Calu3 (cell line): ENCODE measurements at regions of chr12 and their contacts with region 1.

Region 1: DNA sequence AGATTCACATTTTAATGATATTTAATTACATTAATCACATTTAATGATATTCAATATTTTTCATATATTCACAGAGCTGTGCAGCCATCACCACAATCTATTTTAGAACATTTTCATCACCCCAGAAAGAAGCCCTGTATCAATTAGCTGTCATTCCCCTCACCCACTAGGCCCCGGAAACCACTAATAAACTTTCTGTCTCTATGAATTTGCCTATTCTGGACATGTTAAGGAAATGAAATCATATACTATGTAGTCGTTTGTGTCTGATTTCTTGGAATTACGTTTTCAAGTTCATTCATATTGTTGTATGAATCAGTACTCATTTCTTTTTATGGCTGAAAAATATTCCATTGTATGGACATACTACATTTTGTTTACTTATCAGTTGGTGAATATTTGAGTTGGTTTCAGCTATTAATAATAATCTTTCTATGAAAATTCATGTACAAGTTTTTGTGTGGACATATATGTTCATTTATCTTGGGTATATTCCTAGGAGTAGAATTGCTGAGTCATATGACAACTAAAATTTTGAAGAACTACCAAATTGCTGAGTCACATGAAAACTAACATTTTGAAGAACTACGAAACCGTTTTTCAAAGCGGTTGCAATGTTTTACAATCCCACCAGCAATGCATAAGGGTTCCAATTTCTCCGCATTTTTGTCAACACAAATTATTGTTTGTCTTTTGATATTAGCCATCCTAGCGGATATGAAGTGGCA is 11.7 kb upstream of the OTOGL start:
- DNase-seq: no peak
- H3K4me3 Mint-ChIP-seq: no peak overlapping the region
- H3K27ac Mint-ChIP-seq: no peak overlapping the region
- H3K4me1 Mint-ChIP-seq: peaks cover 20% of the 10 kb centered on the region
- H3K27me3 Mint-ChIP-seq: no peaks in the 10 kb centered on the region
- CTCF ChIP-seq: no peak

Region 2: GRCh38 chr12:79935021-79935623 is 152.5 kb before region 1 on chr12 and contains the start of gene PPP1R12A:
- CTCF ChIA-PET with region 1: no interaction called
- intact Hi-C with region 1: loop called (anchors 10 kb)
- DNase-seq: peak; percentile 99
- H3K4me3 Mint-ChIP-seq: peak within 1 kb of the TSS; percentile 93
- H3K27ac Mint-ChIP-seq: peak within 1 kb of the TSS; percentile 94
- H3K4me1 Mint-ChIP-seq: peaks cover 15% of the 10 kb centered on the region
- H3K27me3 Mint-ChIP-seq: no peaks in the 10 kb centered on the region
- CTCF ChIP-seq: no peak
- total RNA-seq, gene PPP1R12A: 86.7 and 97.4 TPM in 2 replicates

Region 3: GRCh38 chr12:80099259-80099658 is 11.6 kb after region 1 on chr12 and contains the start of gene OTOGL:
- CTCF ChIA-PET with region 1: no interaction called
- intact Hi-C with region 1: loop called (anchors 1 kb)
- DNase-seq: no peak
- H3K4me3 Mint-ChIP-seq: no peak within 1 kb of the TSS
- H3K27ac Mint-ChIP-seq: no peak within 1 kb of the TSS
- H3K4me1 Mint-ChIP-seq: no peaks in the 10 kb centered on the region
- H3K27me3 Mint-ChIP-seq: no peaks in the 10 kb centered on the region
- CTCF ChIP-seq: no peak
- total RNA-seq, gene OTOGL: 0.05 and 0.09 TPM in 2 replicates